Caco-2 (cell line): ENCODE measurements at regions of chr10 and their contacts with region 1.

Region 1: DNA sequence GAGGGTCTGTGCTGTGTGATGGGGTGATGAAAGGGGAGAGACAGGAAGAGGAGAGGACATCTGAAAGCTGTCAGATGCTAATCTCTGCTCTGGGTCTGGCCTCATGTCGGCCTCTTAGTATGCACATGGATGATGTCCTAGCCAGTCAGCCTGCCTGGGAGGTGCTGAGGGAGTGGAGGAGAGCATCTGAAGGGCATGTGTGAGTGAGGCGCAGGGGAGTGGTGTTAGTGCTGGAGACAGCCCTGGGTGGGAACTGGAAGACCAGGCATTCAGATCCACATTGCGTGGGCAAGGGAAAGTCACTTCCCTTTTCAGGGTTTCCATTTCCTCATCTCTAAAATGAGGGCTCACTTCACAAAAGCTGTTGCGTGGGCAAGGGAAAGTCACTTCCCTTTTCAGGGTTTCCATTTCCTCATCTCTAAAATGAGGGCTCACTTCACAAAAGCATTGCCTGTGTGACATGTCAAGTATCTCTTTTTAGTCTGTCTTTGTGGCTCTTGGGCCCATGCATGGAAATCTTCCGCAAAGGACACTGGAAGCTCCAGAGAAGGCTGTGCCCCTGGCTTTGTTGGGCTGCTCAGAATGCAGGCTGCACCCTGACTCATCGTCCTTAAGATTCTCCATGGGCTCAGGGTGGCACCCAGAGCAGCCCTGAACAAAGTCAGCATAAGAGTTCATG is 10.0 kb downstream of the SFTPD start:
- DNase-seq: no peak
- H3K4me3 ChIP-seq: no peak overlapping the region
- H3K4me3 Mint-ChIP-seq: no peak overlapping the region
- H3K27ac Mint-ChIP-seq: no peak overlapping the region
- H3K4me1 ChIP-seq: peaks cover 9% of the 10 kb centered on the region
- H3K4me1 Mint-ChIP-seq: peaks cover 4% of the 10 kb centered on the region
- H3K27me3 ChIP-seq: no peaks in the 10 kb centered on the region
- H3K27me3 Mint-ChIP-seq: peaks cover 4% of the 10 kb centered on the region
- CTCF ChIP-seq: no peak

Region 2: DNA sequence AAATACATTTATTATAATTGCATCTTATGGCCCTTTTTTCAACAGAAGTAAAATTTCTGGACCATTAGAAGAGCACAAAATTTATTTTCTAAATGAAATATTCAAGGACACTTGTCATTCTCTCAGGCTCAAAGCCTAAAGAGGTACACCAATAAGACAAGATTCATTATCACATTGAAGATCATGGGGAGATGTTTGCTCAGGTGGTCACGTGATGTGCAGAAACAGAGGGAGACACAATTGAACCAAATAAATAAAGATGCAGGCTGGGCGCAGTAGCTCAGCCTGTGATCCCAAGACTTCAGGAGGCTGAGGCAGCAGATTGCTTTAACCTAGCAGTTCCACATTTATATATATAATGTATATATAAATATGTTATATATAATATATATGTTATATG is 86.4 kb after region 1 on chr10:
- CTCF ChIA-PET with region 1: no interaction called
- POLR2A ChIA-PET with region 1: no interaction called
- intact Hi-C with region 1: loop called (anchors 10 kb)
- DNase-seq: no peak
- H3K4me3 ChIP-seq: no peak overlapping the region
- H3K4me3 Mint-ChIP-seq: no peak overlapping the region
- H3K27ac Mint-ChIP-seq: no peak overlapping the region
- H3K4me1 ChIP-seq: peaks cover 7% of the 10 kb centered on the region
- H3K4me1 Mint-ChIP-seq: no peaks in the 10 kb centered on the region
- H3K27me3 ChIP-seq: no peaks in the 10 kb centered on the region
- H3K27me3 Mint-ChIP-seq: no peaks in the 10 kb centered on the region
- CTCF ChIP-seq: no peak